Calu3 (cell line): ENCODE measurements at regions of chr14 and their contacts with region 1.

Region 1: DNA sequence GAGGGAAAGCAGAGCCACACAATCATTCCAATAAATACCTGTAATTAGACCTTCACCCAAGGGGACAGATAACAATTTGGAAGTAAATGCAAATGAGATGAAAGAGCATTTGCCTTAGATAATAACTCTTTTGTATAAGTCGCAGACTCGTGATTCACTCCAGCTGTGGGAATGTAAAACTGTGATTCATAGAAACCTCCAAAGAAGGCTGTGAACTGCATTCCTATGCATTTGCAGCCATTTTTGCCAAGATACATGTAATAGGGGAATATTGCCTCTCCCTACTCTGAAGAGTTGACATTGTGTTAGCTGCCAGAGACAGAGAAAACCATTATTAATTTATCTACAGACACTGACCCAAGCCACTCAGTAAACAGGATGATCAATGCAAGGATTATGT is 181.9 kb upstream of the ARHGAP5 start:
- DNase-seq: no peak
- H3K4me3 Mint-ChIP-seq: no peak overlapping the region
- H3K27ac Mint-ChIP-seq: no peak overlapping the region
- H3K4me1 Mint-ChIP-seq: peaks cover 19% of the 10 kb centered on the region
- H3K27me3 Mint-ChIP-seq: no peaks in the 10 kb centered on the region
- CTCF ChIP-seq: no peak

Region 2: DNA sequence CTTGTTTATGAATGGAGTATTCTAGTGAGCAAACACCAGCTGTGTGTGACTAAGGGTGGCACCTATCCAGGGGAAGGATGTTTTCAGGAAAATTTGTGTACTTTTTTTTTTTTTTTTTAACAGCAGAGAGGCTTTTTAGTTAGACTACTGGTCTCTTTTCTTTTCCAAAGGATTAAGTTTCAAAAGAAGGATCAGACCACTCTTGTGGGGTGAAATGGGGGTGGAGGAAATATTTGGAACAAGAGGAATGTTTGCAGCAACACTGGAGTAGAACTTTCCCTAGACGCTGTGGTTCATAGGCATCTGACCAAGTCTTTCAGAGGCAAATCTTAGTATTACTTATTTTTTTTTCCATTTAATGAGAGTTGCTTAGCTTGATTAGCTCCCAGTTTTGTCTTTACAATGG is 312.9 kb before region 1 on chr14:
- CTCF ChIA-PET with region 1: no interaction called
- intact Hi-C with region 1: loop called (anchors 10 kb)
- DNase-seq: no peak
- H3K4me3 Mint-ChIP-seq: no peak overlapping the region
- H3K27ac Mint-ChIP-seq: no peak overlapping the region
- H3K4me1 Mint-ChIP-seq: no peaks in the 10 kb centered on the region
- H3K27me3 Mint-ChIP-seq: no peaks in the 10 kb centered on the region
- CTCF ChIP-seq: no peak